ENCODE measurements at regions of chr3 and their contacts with region 1.

Region 1: GRCh38 chr3:122392868-122393844 is 9.2 kb downstream of the FAM162A start:
- DNase-seq: peak; percentile 56
- H3K4me3 ChIP-seq: no peak overlapping the region
- H3K27ac ChIP-seq: no peak overlapping the region
- H3K4me1 ChIP-seq: peaks cover 4% of the 10 kb centered on the region
- H3K27me3 ChIP-seq: no peaks in the 10 kb centered on the region
- CTCF ChIP-seq: peak; percentile 56 to 61
- POLR2A ChIP-seq: no peak

Region 2: GRCh38 chr3:122169908-122170307 is 223.2 kb before region 1 on chr3:
- CTCF ChIA-PET with region 1: no interaction called
- POLR2A ChIA-PET with region 1: no interaction called
- dilution Hi-C with region 1: no loop called
- intact Hi-C with region 1: no loop called
- DNase-seq: no peak
- H3K4me3 ChIP-seq: no peak overlapping the region
- H3K27ac ChIP-seq: no peak overlapping the region
- H3K4me1 ChIP-seq: no peaks in the 10 kb centered on the region
- H3K27me3 ChIP-seq: no peaks in the 10 kb centered on the region
- CTCF ChIP-seq: no peak
- POLR2A ChIP-seq: no peak

Region 3: DNA sequence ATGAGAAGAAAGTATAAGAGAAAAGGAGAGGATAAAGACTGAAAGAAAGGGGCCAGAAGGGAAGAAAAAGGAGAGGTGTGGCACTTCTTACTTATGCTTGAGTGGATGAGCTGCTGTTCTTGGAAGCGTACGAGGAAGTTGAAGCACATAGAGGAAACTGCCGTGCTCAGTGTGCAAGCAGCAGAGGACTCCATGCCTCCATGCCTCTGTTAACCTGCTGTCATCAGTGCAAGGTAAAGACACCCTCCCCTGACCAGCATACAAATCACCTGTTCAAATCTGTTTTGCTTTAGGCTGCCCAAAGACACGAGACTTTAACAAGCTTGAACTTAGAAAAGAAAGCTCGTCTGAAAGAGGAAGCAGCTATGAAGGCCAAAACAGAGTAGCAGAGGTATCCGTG is 16.3 kb after region 1 on chr3:
- CTCF ChIA-PET with region 1: interaction called, 22 read pairs
- POLR2A ChIA-PET with region 1: no interaction called
- dilution Hi-C with region 1: no loop called
- intact Hi-C with region 1: no loop called
- DNase-seq: no peak
- H3K4me3 ChIP-seq: no peak overlapping the region
- H3K27ac ChIP-seq: no peak overlapping the region
- H3K4me1 ChIP-seq: no peaks in the 10 kb centered on the region
- H3K27me3 ChIP-seq: no peaks in the 10 kb centered on the region
- CTCF ChIP-seq: no peak
- POLR2A ChIP-seq: no peak

Region 4: DNA sequence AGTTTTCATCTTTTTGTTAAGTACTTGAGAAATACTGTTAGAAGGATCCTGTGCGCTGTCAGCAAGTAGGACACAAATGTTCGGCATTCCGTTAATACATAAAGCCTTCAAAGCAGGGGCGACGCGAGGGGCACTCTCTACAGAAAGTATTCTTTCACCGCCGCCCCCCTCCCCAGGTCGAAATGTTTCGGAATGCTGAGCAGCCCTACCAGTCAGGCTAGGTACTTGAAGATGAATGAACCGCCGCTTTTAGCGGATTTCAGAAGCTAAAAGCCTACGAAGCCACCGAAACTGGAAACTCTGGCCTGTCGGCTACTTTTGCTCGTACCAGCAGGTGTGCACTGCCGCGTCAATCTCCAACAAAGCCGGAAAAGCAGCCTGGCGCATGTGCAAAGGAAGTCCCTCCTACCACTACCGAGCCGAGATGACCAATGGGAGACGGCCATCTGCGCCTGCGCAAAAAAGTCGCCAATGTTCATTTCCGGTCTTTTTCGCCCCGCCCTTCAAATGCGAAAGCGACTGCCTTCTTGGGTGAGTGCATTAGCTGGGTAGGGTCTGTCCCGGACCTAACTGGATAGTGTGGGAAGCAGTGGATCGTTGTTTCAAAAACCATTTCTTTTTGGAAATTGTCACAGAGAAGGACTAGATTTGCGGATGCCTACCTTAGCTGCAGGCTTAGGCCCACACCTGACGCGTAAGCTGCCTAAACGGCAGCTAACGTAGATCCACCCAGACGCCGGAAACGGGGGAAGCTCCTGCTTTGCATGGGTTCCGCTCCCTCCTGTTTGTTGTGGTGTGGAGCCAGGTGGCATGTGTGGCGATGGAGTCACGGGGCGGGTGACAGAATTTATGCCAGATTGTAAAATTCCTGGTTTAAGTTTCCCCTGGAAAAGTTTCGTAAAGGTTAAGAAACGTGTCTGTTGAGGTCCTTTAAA is 22.8 kb after region 1 on chr3 and contains the start of gene WDR5B:
- CTCF ChIA-PET with region 1: interaction called, 13 read pairs
- POLR2A ChIA-PET with region 1: no interaction called
- dilution Hi-C with region 1: no loop called
- intact Hi-C with region 1: no loop called
- DNase-seq: peak; percentile 99
- H3K4me3 ChIP-seq: peak within 1 kb of the TSS; percentile 71 to 94 (median 80)
- H3K27ac ChIP-seq: peak within 1 kb of the TSS; percentile 90
- H3K4me1 ChIP-seq: peaks cover 9% of the 10 kb centered on the region
- H3K27me3 ChIP-seq: no peaks in the 10 kb centered on the region
- CTCF ChIP-seq: peak in 1 of 2 donors; percentile 29
- POLR2A ChIP-seq: peak; percentile 97
- total RNA-seq, gene WDR5B: 2.6 and 3.7 TPM in 2 replicates

Region 5: DNA sequence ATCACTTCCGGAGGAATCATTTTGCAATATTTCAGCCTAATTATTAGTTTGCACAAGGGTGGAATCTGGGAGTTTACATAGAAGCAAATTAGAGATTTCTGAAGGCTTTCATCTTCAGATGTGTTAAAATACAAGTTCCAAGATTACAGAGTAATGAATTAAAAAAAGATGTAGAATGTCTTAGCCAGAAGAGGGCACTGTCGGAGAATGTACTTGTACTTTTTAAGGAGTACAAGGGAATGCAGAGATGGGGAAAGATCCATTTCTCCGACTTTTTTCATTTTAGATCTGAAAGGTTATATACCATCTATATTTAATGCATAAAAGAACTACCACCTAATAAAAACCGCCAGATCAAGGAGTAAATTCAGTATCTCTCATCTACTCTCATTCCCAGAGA is 65.8 kb after region 1 on chr3:
- CTCF ChIA-PET with region 1: interaction called, 10 read pairs
- POLR2A ChIA-PET with region 1: no interaction called
- dilution Hi-C with region 1: no loop called
- intact Hi-C with region 1: no loop called
- DNase-seq: peak; percentile 51
- H3K4me3 ChIP-seq: no peak overlapping the region
- H3K27ac ChIP-seq: no peak overlapping the region
- H3K4me1 ChIP-seq: no peaks in the 10 kb centered on the region
- H3K27me3 ChIP-seq: no peaks in the 10 kb centered on the region
- CTCF ChIP-seq: peak in 1 of 2 donors; percentile 3
- POLR2A ChIP-seq: no peak

Region 6: DNA sequence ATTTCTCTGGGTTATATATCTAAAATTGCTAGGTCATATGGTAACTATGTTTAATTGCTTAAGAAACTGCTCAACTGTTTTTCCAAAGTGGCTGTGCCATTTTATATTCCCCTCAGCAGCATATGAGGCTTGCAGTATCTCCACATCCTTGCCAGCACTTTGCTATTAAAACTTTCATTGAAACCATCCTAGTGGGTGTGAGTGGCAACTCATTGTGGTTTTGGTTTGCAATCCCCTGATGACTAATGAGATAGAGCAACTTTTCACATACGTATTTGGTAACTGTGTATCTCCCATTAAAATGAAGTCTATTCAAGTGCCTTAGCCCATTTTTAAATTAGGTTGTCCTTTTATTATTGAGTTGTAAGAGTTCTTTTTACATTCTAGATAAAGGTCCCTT is 104.3 kb after region 1 on chr3:
- CTCF ChIA-PET with region 1: no interaction called
- POLR2A ChIA-PET with region 1: no interaction called
- dilution Hi-C with region 1: no loop called
- intact Hi-C with region 1: no loop called
- DNase-seq: no peak
- H3K4me3 ChIP-seq: no peak overlapping the region
- H3K27ac ChIP-seq: no peak overlapping the region
- H3K4me1 ChIP-seq: no peaks in the 10 kb centered on the region
- H3K27me3 ChIP-seq: no peaks in the 10 kb centered on the region
- CTCF ChIP-seq: no peak
- POLR2A ChIP-seq: no peak

Region 7: GRCh38 chr3:122564155-122564912 is 171.2 kb after region 1 on chr3 and contains the starts of genes DTX3L and PARP9:
- CTCF ChIA-PET with region 1: interaction called, 6 read pairs
- POLR2A ChIA-PET with region 1: no interaction called
- dilution Hi-C with region 1: no loop called
- intact Hi-C with region 1: loop called (anchors 5 kb)
- DNase-seq: peak; percentile 77
- H3K4me3 ChIP-seq: peak within 1 kb of the TSS; percentile 60 to 96 (median 74)
- H3K27ac ChIP-seq: peak within 1 kb of the TSS; percentile 63
- H3K4me1 ChIP-seq: peaks cover 8% of the 10 kb centered on the region
- H3K27me3 ChIP-seq: no peaks in the 10 kb centered on the region
- CTCF ChIP-seq: no peak
- POLR2A ChIP-seq: peak; percentile 30
- total RNA-seq, gene DTX3L: 13.8 and 20.5 TPM in 2 replicates
- total RNA-seq, gene PARP9: 9.7 and 12.5 TPM in 2 replicates

Region 8: DNA sequence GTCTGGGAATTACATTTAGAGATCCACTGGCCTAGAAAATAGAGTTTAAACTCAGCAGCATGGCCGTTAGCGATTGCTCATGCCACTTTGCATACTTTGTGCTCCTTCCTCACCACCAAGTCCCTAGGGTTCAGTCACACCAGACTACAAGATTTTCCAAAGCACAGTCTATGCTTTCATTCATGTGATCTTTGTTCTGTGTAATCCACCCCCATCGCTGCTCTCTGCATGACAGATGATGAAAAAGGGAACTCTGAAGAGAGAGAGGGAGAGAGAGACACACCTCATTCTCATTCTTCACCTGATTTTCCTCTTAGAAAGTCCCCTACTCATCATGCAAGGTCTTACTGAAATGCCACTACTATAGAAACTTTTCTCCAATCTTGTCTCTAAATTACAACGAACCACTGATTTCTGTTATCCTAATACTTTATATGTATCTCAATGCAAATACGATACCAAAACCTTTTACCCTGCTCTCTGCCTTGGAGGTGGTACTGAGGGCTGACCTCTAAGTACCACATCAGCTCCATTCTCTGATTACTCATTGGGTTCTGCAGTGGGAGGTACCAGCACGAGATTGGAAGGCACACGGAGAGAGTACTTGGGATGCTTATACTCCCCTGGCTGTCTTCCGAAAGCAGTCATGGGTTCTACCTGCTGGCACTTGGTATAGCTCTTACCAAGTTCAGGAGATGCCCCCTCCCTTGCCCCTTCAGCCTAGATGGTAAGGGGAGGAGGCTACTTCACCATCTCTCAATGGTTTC is 183.2 kb after region 1 on chr3:
- CTCF ChIA-PET with region 1: no interaction called
- POLR2A ChIA-PET with region 1: no interaction called
- dilution Hi-C with region 1: no loop called
- intact Hi-C with region 1: no loop called
- DNase-seq: no peak
- H3K4me3 ChIP-seq: no peak overlapping the region
- H3K27ac ChIP-seq: no peak overlapping the region
- H3K4me1 ChIP-seq: peaks cover 14% of the 10 kb centered on the region
- H3K27me3 ChIP-seq: no peaks in the 10 kb centered on the region
- CTCF ChIP-seq: no peak
- POLR2A ChIP-seq: no peak

Region 9: GRCh38 chr3:122942937-122943827 is 550.0 kb after region 1 on chr3:
- CTCF ChIA-PET with region 1: interaction called, 4 read pairs
- POLR2A ChIA-PET with region 1: no interaction called
- dilution Hi-C with region 1: no loop called
- intact Hi-C with region 1: loop called (anchors 1 kb)
- DNase-seq: peak; percentile 17
- H3K4me3 ChIP-seq: no peak overlapping the region
- H3K27ac ChIP-seq: no peak overlapping the region
- H3K4me1 ChIP-seq: peaks cover 11% of the 10 kb centered on the region
- H3K27me3 ChIP-seq: peaks cover 2 to 4% of the 10 kb centered on the region in 2 experiments
- CTCF ChIP-seq: peak; percentile 85 to 91
- POLR2A ChIP-seq: no peak

Region 10: GRCh38 chr3:123258811-123259420 is 865.8 kb after region 1 on chr3:
- CTCF ChIA-PET with region 1: interaction called, 4 read pairs
- POLR2A ChIA-PET with region 1: no interaction called
- dilution Hi-C with region 1: no loop called
- intact Hi-C with region 1: loop called (anchors 10 kb)
- DNase-seq: peak; percentile 75
- H3K4me3 ChIP-seq: no peak overlapping the region
- H3K27ac ChIP-seq: no peak overlapping the region
- H3K4me1 ChIP-seq: no peaks in the 10 kb centered on the region
- H3K27me3 ChIP-seq: no peaks in the 10 kb centered on the region
- CTCF ChIP-seq: peak; percentile 41 to 55
- POLR2A ChIP-seq: no peak

Measured in endothelial cell of umbilical vein (primary cell).